ENCODE measurements at regions of chr19 and their contacts with region 1.

Region 1: GRCh38 chr19:10580979-10581631 is 6.0 kb downstream of the AP1M2 start:
- DNase-seq: peak; percentile 81 to 96 (median 91)

Region 2: GRCh38 chr19:10644260-10645007 is 63.3 kb after region 1 on chr19:
- intact Hi-C with region 1: loop called (anchors 2 kb)
- DNase-seq: peak; percentile 67 to 95 (median 88)

Region 3: DNA sequence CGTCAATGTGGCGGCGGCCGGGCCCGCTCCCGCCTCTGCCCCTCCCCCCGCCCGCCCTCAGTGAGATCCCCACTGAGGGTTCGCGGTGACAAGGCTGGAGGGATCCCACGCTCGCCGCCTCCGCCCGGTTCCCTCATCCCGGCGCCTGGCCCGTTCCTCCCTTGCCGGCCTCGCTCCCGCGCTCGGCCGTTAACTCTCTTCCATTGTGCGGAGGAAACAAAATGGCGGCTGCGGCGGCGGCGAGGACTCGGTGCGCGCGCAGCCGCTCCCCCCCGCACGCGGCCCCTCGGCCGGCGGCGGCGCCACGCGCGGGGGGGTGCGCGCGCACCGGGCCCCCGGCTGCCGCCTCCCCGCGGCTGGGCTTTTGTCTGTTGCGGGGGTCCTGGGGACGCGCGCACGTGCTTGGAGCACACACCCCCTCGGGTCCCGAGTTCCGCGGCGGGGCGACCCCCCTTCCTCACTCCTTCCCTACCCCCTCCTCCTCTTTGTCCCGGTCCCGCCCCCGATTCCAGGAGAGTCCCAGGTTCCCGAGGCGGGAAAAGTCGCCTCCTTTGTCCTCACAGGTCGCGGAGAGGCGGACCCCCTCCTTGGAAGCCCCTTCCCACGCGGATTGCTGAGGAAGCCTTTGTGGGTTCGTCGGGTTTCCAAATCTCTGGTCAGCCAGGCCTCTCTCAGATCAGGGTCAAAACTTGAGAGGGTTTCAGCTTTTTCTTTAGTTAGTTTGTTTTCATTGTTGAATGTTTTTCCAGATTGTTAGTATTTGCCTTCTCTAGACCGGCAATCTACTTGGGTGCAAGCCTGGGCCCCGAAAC is 73.6 kb after region 1 on chr19:
- intact Hi-C with region 1: no loop called
- DNase-seq: peak in 30 of 42 donors; percentile 15 to 76 (median 50)

Measured in head of caudate nucleus (tissue), 42 donors.